Transverse colon (tissue), 4 donors: ENCODE measurements at regions of chr3 and their contacts with region 1.

Region 1: DNA sequence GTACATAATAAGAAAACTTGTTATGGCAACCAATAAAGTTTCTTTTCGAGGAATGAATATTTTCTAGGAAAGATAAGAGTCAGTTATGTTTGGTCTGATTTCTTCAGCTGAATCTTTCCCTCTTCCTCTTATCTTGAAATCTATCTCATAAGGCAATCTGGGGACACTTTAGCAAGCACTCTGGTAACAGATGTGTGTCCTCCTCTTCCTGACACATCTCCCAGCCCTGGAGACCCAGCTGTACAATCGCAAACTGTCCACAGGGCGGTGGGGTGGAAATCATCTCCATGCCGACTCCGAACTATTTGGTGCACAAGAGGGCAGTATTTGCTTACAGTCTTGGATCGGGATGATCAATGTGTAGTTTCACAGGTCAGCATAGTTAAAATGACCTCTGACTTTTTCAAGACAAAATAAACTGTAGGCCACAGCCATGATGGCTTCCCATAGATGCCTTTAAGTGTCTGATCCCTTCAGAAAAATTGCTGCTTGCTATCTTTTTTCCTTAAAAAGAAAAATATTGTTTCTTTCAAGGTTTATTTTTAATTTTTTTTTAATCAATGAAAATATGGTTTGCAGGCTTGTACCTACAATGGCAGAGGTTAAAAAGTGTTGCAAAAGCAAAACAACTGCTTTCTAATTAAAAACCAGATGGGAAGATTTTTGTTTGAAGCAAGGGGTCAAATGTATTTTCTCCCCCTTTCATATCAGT is 17.7 kb downstream of the EEFSEC start:
- DNase-seq: peak; percentile 47
- H3K4me3 ChIP-seq: no peak overlapping the region
- H3K27ac ChIP-seq: no peak overlapping the region
- H3K4me1 ChIP-seq: peaks cover 0 to 10% (median 0%) of the 10 kb centered on the region in 4 donors
- H3K27me3 ChIP-seq: no peaks in the 10 kb centered on the region
- CTCF ChIP-seq: peak; percentile 51 to 81 (median 63)
- EP300 ChIP-seq: no peak
- POLR2A ChIP-seq: no peak

Region 2: GRCh38 chr3:128041344-128041743 is 129.6 kb before region 1 on chr3:
- in situ Hi-C with region 1: no loop called
- intact Hi-C with region 1: no loop called
- DNase-seq: no peak
- H3K4me3 ChIP-seq: no peak overlapping the region
- H3K27ac ChIP-seq: no peak overlapping the region
- H3K4me1 ChIP-seq: no peaks in the 10 kb centered on the region
- H3K27me3 ChIP-seq: peaks cover 11% of the 10 kb centered on the region
- CTCF ChIP-seq: no peak
- EP300 ChIP-seq: no peak
- POLR2A ChIP-seq: no peak

Region 3: GRCh38 chr3:128307029-128307633 is 136.2 kb after region 1 on chr3:
- in situ Hi-C with region 1: no loop called
- intact Hi-C with region 1: no loop called
- DNase-seq: no peak
- H3K4me3 ChIP-seq: no peak overlapping the region
- H3K27ac ChIP-seq: no peak overlapping the region
- H3K4me1 ChIP-seq: no peaks in the 10 kb centered on the region
- H3K27me3 ChIP-seq: no peaks in the 10 kb centered on the region
- CTCF ChIP-seq: peak in 1 of 5 experiments; percentile 14
- EP300 ChIP-seq: no peak
- POLR2A ChIP-seq: no peak

Region 4: DNA sequence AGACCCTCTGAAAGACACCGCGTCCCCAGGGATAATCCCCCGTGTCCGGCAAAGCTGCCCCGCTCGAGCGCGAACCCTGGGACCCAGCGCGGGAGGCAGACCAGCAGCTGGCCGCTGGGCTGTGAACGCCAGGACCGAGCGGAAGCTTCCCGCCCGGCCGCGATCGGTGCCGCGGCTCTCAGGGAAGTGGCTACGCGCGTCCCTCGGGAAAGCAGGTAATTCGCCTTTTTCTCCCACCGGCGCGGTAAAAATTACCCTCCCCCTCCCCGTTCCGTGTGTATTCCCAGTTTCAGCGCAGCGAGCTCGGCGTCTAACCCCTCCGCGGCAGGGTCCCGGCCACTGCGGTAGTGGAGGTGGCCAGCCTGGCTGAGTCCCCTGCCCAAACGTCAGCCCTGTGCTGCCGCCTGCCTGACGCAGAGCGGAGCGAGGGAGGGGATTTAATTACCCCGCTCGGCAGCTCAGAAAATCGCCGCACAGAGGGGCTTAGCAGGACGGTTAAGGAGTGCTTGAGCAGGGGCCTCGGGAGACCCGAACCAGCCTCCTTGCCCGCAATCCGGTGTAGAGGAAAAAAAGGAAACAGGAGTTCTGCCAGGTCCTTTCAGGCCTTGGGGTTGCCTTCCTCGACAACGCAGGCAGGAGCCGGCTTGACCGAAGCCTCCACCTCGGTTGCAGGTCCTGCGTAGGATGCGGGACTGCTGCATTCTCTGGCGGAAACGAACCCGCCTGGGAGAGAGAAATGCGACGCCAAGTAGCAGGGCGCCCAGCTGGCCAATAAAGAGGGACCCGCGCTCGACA is 319.1 kb after region 1 on chr3:
- in situ Hi-C with region 1: loop called in 1 of 4 experiments (anchors 25 kb)
- intact Hi-C with region 1: loop called (anchors 5 kb)
- DNase-seq: no peak
- H3K4me3 ChIP-seq: peak overlapping the region in 3 of 4 donors; percentile 33 to 56 (median 39)
- H3K27ac ChIP-seq: peak overlapping the region; percentile 28 to 53 (median 43)
- H3K4me1 ChIP-seq: peaks cover 30 to 55% (median 55%) of the 10 kb centered on the region in 4 donors
- H3K27me3 ChIP-seq: peaks cover 100% of the 10 kb centered on the region
- CTCF ChIP-seq: no peak
- EP300 ChIP-seq: no peak
- POLR2A ChIP-seq: no peak